ENCODE measurements at regions of chr14 and their contacts with region 1.

Region 1: GRCh38 chr14:87896393-87897380 is 96.3 kb downstream of the GALC start:
- DNase-seq: no peak
- H3K4me3 ChIP-seq: no peak overlapping the region
- H3K27me3 ChIP-seq: no peaks in the 10 kb centered on the region
- CTCF ChIP-seq: peak; percentile 64

Region 2: GRCh38 chr14:87745507-87746118 is 151.1 kb before region 1 on chr14:
- CTCF ChIA-PET with region 1: interaction called, 20 read pairs
- POLR2A ChIA-PET with region 1: no interaction called
- DNase-seq: no peak
- H3K4me3 ChIP-seq: no peak overlapping the region
- H3K27me3 ChIP-seq: no peaks in the 10 kb centered on the region
- CTCF ChIP-seq: peak; percentile 76

Region 3: GRCh38 chr14:87799400-87799799 is 97.3 kb before region 1 on chr14:
- CTCF ChIA-PET with region 1: interaction called, 157 read pairs
- POLR2A ChIA-PET with region 1: no interaction called
- DNase-seq: no peak
- H3K4me3 ChIP-seq: no peak overlapping the region
- H3K27me3 ChIP-seq: no peaks in the 10 kb centered on the region
- CTCF ChIP-seq: no peak

Region 4: DNA sequence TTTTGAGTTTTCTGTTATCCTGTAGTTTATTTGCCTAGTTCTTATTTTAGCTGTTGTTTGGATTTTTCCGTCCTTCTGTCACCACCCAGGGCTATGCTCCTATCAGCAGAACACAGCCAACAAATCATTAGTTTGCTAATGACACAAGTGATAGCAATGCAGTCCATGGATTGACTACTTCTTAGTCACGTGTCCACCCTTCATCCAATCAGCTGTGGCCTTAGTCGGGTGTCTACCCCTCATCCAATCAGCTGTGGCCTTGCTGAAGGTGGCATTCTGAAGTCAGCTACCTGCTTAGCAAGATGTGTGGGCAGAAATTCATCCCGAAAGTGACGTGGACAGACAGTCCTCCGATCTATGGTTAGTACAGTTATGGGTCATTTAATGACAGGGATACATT is 86.0 kb before region 1 on chr14:
- CTCF ChIA-PET with region 1: interaction called, 157 read pairs
- POLR2A ChIA-PET with region 1: no interaction called
- DNase-seq: no peak
- H3K4me3 ChIP-seq: no peak overlapping the region
- H3K27me3 ChIP-seq: no peaks in the 10 kb centered on the region
- CTCF ChIP-seq: no peak

Measured in BJ (cell line).